GM12878 (cell line): ENCODE measurements at regions of chr18 and their contacts with region 1.

Region 1: DNA sequence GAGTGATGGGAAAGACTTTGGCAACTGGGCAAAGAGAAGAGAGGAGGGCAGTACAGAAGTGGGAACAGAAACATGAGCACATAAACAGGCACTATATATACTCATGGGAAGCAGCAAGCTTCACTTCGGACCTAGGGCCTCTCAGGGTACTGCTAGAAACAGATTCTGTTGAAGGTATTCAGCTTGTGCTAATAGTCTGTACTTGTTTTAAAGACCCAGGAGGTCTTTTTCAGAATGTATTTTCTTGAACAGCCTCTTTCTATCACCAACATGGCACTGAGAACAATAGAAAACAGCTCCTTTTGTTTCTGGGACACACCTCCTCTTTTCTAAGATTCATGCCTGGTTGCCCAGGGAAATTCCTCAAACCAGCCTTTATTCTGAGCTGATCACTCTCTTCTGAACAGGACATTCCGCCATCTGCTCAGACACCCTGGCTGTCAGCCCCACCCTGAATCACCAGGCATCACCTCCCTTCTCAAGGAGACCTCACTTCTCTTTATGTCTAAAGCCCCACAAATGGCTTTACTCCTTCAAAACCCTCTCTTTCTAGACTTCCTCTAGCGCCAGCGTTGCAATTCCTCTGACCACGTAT is 389.6 kb downstream of the TGIF1 start:
- DNase-seq: no peak
- ATAC-seq: peak; percentile 44
- H3K4me3 ChIP-seq: no peak overlapping the region
- H3K27ac ChIP-seq: no peak overlapping the region
- H3K4me1 ChIP-seq: no peaks in the 10 kb centered on the region
- H3K27me3 ChIP-seq: no peaks in the 10 kb centered on the region
- CTCF ChIP-seq: no peak
- EP300 ChIP-seq: no peak
- POLR2A ChIP-seq: no peak
- RAD21 ChIP-seq: no peak

Region 2: GRCh38 chr18:3827236-3827875 is 12.2 kb before region 1 on chr18:
- CTCF ChIA-PET with region 1: interaction called, 11 read pairs
- POLR2A ChIA-PET with region 1: interaction called, 7 read pairs
- RAD21 ChIA-PET with region 1: interaction called, 3 read pairs
- SMC1A ChIA-PET with region 1: interaction called, 10 read pairs
- in situ Hi-C with region 1: no loop called
- intact Hi-C with region 1: no loop called
- DNase-seq: no peak
- ATAC-seq: no peak
- H3K4me3 ChIP-seq: no peak overlapping the region
- H3K27ac ChIP-seq: no peak overlapping the region
- H3K4me1 ChIP-seq: no peaks in the 10 kb centered on the region
- H3K27me3 ChIP-seq: no peaks in the 10 kb centered on the region
- CTCF ChIP-seq: no peak
- EP300 ChIP-seq: no peak
- POLR2A ChIP-seq: no peak
- RAD21 ChIP-seq: no peak

Region 3: GRCh38 chr18:3889803-3890202 is 50.2 kb after region 1 on chr18:
- CTCF ChIA-PET with region 1: no interaction called
- POLR2A ChIA-PET with region 1: no interaction called
- RAD21 ChIA-PET with region 1: no interaction called
- SMC1A ChIA-PET with region 1: no interaction called
- in situ Hi-C with region 1: no loop called
- intact Hi-C with region 1: no loop called
- DNase-seq: no peak
- ATAC-seq: peak; percentile 25; the same call in 2 of the 3 replicates
- H3K4me3 ChIP-seq: no peak overlapping the region
- H3K27ac ChIP-seq: no peak overlapping the region
- H3K4me1 ChIP-seq: no peaks in the 10 kb centered on the region
- H3K27me3 ChIP-seq: no peaks in the 10 kb centered on the region
- CTCF ChIP-seq: no peak
- EP300 ChIP-seq: no peak
- POLR2A ChIP-seq: no peak
- RAD21 ChIP-seq: no peak

Region 4: GRCh38 chr18:4074647-4075046 is 235.1 kb after region 1 on chr18:
- CTCF ChIA-PET with region 1: no interaction called
- POLR2A ChIA-PET with region 1: no interaction called
- RAD21 ChIA-PET with region 1: no interaction called
- SMC1A ChIA-PET with region 1: no interaction called
- in situ Hi-C with region 1: no loop called
- intact Hi-C with region 1: no loop called
- DNase-seq: no peak
- ATAC-seq: no peak
- H3K4me3 ChIP-seq: no peak overlapping the region
- H3K27ac ChIP-seq: no peak overlapping the region
- H3K4me1 ChIP-seq: no peaks in the 10 kb centered on the region
- H3K27me3 ChIP-seq: no peaks in the 10 kb centered on the region
- CTCF ChIP-seq: no peak
- EP300 ChIP-seq: no peak
- POLR2A ChIP-seq: no peak
- RAD21 ChIP-seq: no peak